Pancreas (tissue), 10 donors: ENCODE measurements at regions of chr1 and their contacts with region 1.

Region 1: DNA sequence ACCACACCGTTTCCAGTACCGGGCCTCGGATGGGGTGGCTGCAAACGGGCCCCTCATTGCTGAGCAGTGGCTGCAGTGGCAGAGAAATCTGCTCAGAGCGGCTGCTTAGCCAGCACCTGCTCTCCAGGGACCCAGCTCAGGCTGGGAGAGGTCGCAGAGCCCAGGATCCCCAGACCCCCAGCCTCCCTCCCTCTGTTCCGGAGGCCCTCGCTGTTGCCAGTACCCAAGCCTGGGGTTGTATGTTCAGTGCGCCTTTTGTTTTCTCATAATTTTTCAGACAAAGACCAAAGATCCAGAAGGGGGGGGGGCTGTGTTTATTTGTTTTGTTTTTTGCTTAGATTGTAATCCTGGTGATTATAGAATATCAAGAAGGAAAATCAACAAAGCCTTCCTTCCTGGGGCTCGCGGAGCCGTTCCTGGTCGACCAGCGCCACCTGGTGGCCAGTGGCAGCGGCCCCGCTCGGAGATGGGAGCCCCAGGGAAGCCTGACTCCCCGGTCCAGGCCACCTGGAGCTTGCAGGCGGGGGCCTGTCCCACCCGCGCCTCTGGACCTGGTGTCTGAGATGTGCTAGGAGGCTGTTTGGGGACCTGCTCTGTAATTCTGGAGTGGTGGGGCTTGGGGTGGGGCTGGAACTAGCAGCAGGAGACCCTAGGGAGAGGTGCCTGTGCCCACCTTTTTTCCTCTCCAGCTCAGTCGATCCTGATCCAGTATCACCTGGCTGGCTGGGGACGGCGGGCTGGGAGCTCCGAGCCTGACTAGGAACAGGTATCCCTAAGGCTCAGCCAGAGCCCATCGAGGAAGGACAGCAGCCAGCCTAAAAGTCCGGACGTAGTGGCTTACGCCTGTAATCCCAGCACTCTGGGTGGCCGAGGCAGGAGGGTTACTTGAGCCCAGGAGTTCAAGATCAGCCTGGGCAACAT is 123.9 kb upstream of the VAMP3 start:
- DNase-seq: peak; percentile 46 to 97 (median 77)
- ATAC-seq: peak; percentile 62 to 77 (median 76)
- H3K4me3 ChIP-seq: no peak overlapping the region
- H3K27ac ChIP-seq: no peak overlapping the region
- H3K4me1 ChIP-seq: no peaks in the 10 kb centered on the region
- H3K27me3 ChIP-seq: no peaks in the 10 kb centered on the region
- CTCF ChIP-seq: peak; percentile 83 to 97 (median 88)

Region 2: GRCh38 chr1:6971048-6971447 is 676.2 kb before region 1 on chr1:
- intact Hi-C with region 1: loop called in 1 of 3 experiments (anchors 5 kb)
- DNase-seq: no peak
- ATAC-seq: no peak
- H3K4me3 ChIP-seq: no peak overlapping the region
- H3K27ac ChIP-seq: no peak overlapping the region
- H3K4me1 ChIP-seq: no peaks in the 10 kb centered on the region
- H3K27me3 ChIP-seq: no peaks in the 10 kb centered on the region
- CTCF ChIP-seq: no peak

Region 3: GRCh38 chr1:7042322-7043190 is 604.7 kb before region 1 on chr1:
- intact Hi-C with region 1: loop called in 1 of 3 experiments (anchors 5 kb)
- DNase-seq: no peak
- ATAC-seq: peak in 3 of 4 donors; percentile 70 to 77 (median 71)
- H3K4me3 ChIP-seq: no peak overlapping the region
- H3K27ac ChIP-seq: no peak overlapping the region
- H3K4me1 ChIP-seq: no peaks in the 10 kb centered on the region
- H3K27me3 ChIP-seq: no peaks in the 10 kb centered on the region
- CTCF ChIP-seq: peak; percentile 36 to 45 (median 39)

Region 4: GRCh38 chr1:7069931-7070330 is 577.3 kb before region 1 on chr1:
- intact Hi-C with region 1: loop called in 1 of 3 experiments (anchors 10 kb)
- DNase-seq: no peak
- ATAC-seq: peak in 3 of 4 donors; percentile 46 to 57 (median 54)
- H3K4me3 ChIP-seq: peak overlapping the region in 1 of 4 donors; percentile 30
- H3K27ac ChIP-seq: no peak overlapping the region
- H3K4me1 ChIP-seq: no peaks in the 10 kb centered on the region
- H3K27me3 ChIP-seq: no peaks in the 10 kb centered on the region
- CTCF ChIP-seq: no peak

Region 5: GRCh38 chr1:7224644-7225043 is 422.6 kb before region 1 on chr1:
- intact Hi-C with region 1: loop called in 1 of 3 experiments (anchors 10 kb)
- DNase-seq: peak in 1 of 6 donors; percentile 25
- ATAC-seq: peak in 1 of 4 donors; percentile 20
- H3K4me3 ChIP-seq: no peak overlapping the region
- H3K27ac ChIP-seq: no peak overlapping the region
- H3K4me1 ChIP-seq: no peaks in the 10 kb centered on the region
- H3K27me3 ChIP-seq: no peaks in the 10 kb centered on the region
- CTCF ChIP-seq: no peak

Region 6: DNA sequence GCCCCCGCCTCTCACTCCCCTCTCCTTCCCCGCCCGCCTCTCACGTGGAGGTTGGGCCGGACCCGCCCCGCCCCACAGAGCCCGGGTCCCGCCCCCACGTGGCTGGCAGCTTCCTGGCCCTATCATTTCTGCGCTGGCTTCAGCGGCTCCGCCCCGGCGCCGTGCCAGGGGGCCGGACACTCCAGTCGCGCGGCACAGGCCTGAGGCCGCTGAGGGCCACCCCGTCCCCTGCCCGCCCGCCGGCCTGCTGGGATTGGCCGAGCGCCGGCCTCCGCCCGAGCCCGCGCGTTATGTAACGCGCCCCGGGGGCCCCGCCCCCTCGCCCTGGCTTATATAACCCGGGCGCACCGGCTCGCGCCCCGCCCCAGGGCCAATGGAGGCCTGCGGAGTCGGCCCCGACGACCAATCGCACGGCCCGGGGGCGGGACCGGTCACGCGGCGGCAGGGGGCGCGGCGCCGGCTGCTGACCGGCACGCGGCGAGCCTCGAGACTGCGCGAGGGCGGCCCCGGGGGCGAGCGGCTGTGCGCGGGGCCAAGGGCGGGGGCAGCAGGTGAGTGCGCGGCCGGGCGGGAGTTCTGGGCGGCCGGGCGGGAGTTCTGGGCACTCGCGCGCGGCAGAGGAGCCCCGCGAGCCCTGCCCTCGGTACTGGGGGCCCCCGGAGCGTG is 136.7 kb after region 1 on chr1 and contains the start of gene PER3:
- intact Hi-C with region 1: no loop called
- DNase-seq: peak; percentile 96 to 100 (median 99)
- ATAC-seq: peak; percentile 88 to 96 (median 91)
- H3K4me3 ChIP-seq: peak within 1 kb of the TSS; percentile 57 to 73 (median 60)
- H3K27ac ChIP-seq: peak within 1 kb of the TSS; percentile 78 to 90 (median 84)
- H3K4me1 ChIP-seq: peaks cover 10 to 17% (median 13%) of the 10 kb centered on the region in 3 donors
- H3K27me3 ChIP-seq: no peaks in the 10 kb centered on the region
- CTCF ChIP-seq: no peak
- total RNA-seq, gene PER3: 4.6 to 13.9 (median 9.6) TPM